CD8-positive, alpha-beta T cell (primary cell): ENCODE measurements at regions of chr11 and their contacts with region 1.

Region 1: DNA sequence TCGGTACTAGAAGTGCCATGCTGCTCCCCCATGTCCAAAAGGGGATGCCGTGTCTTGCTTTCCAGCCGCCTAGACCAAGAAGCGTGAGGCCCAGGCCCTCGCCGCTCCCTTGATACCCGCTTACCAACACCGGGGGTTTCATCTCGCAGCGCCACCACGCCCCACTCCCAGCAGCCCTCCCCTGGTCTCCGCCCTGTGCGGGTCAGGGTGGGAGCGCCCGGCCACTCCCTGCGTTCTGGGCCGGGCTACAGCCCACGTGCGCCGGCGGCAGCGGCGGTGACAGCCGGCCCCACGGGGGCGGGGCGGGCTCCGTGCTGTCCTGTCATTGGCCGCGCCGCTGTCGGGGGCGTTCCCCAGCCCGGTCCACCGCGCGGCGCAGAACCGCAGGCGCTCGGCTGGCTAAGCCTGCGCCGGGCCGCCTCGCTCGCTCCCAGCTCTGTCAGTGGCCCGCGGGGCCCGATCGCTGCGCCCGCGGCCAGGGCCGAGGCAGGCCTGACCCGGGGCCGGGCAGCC is at the start of gene MICAL2:
- DNase-seq: peak; percentile 61 to 92 (median 79)
- ATAC-seq: peak; percentile 94
- H3K4me3 ChIP-seq: peak within 1 kb of the TSS; percentile 44 to 56
- H3K4me3 Mint-ChIP-seq: peak within 1 kb of the TSS; percentile 83
- H3K27ac ChIP-seq: peak within 1 kb of the TSS in 1 of 2 experiments; percentile 5
- H3K27ac Mint-ChIP-seq: peak within 1 kb of the TSS; percentile 70
- H3K4me1 ChIP-seq: peaks cover 13% of the 10 kb centered on the region
- H3K4me1 Mint-ChIP-seq: peaks cover 17% of the 10 kb centered on the region
- H3K27me3 ChIP-seq: no peaks in the 10 kb centered on the region
- H3K27me3 Mint-ChIP-seq: no peaks in the 10 kb centered on the region
- CTCF ChIP-seq: no peak
- total RNA-seq, gene MICAL2: 15.8 TPM

Region 2: DNA sequence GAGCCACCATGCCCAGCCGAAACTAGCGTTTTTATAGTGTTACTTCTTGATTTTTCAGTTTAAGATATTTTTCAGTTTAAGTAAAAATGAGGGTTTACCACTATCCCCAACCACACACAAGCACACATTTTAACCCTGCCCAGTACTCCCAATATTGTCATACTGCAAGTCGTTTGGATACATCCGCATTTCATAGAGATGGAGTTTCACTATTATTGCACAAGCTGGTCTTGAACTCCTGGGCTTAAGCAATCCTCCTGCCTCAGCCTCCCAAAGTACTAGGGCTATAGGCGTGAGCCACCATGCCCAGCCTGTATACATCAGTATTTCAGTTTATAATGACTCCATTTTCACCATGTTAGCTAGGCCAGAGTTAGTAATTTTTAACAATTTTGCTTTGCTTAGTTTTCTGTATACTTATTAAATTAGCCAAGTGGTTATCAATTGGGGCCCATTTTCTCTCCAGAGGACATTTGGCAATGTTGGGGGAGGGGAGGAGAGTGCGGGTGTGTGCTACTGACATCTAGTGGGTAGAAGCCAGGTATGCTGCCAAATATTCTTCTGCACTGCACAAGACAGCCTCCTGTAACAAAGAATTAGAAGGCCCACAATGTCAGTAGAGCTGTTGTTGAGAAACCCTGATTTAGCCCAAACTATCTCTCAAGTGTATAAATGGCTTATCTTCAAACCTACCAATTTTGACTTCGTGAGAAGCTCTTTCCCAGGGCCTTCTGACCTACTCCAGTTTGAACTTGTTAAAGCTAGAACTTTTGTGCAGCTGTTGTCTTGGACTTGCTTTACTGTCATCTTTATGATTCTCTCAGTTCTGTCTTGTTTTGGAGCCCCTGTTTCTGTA is 261.1 kb before region 1 on chr11:
- CTCF ChIA-PET with region 1: no interaction called
- POLR2A ChIA-PET with region 1: no interaction called
- intact Hi-C with region 1: loop called (anchors 5 kb)
- DNase-seq: peak; percentile 19 to 86 (median 63)
- ATAC-seq: peak; percentile 94
- H3K4me3 ChIP-seq: no peak overlapping the region
- H3K4me3 Mint-ChIP-seq: peak overlapping the region; percentile 47
- H3K27ac ChIP-seq: no peak overlapping the region
- H3K27ac Mint-ChIP-seq: peak overlapping the region; percentile 69
- H3K4me1 ChIP-seq: peaks cover 83% of the 10 kb centered on the region
- H3K4me1 Mint-ChIP-seq: peaks cover 86% of the 10 kb centered on the region
- H3K27me3 ChIP-seq: no peaks in the 10 kb centered on the region
- H3K27me3 Mint-ChIP-seq: no peaks in the 10 kb centered on the region
- CTCF ChIP-seq: peak; percentile 75

Region 3: GRCh38 chr11:12224537-12224893 is 114.3 kb after region 1 on chr11:
- CTCF ChIA-PET with region 1: no interaction called
- POLR2A ChIA-PET with region 1: interaction called, 3 read pairs
- intact Hi-C with region 1: loop called in 1 of 2 experiments (anchors 1 kb)
- DNase-seq: peak; percentile 76 to 96 (median 92)
- ATAC-seq: peak; percentile 89
- H3K4me3 ChIP-seq: peak overlapping the region; percentile 35 to 50
- H3K4me3 Mint-ChIP-seq: peak overlapping the region; percentile 65
- H3K27ac ChIP-seq: peak overlapping the region; percentile 47 to 91
- H3K27ac Mint-ChIP-seq: peak overlapping the region; percentile 91
- H3K4me1 ChIP-seq: peaks cover 45% of the 10 kb centered on the region
- H3K4me1 Mint-ChIP-seq: peaks cover 51% of the 10 kb centered on the region
- H3K27me3 ChIP-seq: no peaks in the 10 kb centered on the region
- H3K27me3 Mint-ChIP-seq: no peaks in the 10 kb centered on the region
- CTCF ChIP-seq: no peak